Activated CD4-positive, alpha-beta T cell treated with anti-CD3 and anti-CD28 coated beads for 36 hours (primary cell): ENCODE measurements at regions of chr5 and their contacts with region 1.

Region 1: DNA sequence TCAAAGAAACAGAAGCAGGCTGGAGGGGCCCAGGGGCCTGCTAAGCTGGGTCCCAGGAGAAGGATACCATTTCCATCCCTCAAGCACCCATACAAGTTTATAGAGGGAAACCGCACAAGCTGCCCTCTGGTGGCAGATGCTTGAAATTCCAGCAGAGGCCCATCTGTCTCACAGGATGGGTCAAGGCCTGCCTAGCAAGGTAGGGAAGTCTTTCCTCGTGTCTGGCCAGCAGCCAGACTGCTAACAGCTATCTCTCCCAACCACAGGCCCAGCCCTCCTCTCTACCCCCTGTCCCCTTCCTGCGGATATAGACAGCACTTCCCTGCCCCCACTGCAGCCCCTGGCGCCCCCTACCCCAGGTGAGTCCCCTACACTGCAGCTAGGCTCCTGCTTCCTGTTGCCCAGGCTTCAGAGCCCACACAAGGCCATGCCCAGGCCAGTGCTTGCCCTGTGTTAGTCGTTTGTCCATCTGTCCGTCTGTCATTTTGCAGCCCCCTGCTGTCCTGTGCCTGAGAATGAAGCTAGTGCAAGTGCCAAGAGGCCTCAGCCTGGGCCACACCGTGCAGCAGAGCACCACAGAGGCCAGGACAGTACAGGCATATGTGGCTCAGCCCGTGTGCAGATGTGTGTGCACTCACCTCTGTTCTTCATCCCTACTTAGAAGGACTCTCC is 26.2 kb downstream of the TCF7 start:
- DNase-seq: peak; percentile 82
- ATAC-seq: peak; percentile 42
- H3K4me3 Mint-ChIP-seq: no peak overlapping the region
- H3K27ac Mint-ChIP-seq: no peak overlapping the region
- H3K4me1 Mint-ChIP-seq: peaks cover 69% of the 10 kb centered on the region
- H3K27me3 Mint-ChIP-seq: no peaks in the 10 kb centered on the region

Region 2: DNA sequence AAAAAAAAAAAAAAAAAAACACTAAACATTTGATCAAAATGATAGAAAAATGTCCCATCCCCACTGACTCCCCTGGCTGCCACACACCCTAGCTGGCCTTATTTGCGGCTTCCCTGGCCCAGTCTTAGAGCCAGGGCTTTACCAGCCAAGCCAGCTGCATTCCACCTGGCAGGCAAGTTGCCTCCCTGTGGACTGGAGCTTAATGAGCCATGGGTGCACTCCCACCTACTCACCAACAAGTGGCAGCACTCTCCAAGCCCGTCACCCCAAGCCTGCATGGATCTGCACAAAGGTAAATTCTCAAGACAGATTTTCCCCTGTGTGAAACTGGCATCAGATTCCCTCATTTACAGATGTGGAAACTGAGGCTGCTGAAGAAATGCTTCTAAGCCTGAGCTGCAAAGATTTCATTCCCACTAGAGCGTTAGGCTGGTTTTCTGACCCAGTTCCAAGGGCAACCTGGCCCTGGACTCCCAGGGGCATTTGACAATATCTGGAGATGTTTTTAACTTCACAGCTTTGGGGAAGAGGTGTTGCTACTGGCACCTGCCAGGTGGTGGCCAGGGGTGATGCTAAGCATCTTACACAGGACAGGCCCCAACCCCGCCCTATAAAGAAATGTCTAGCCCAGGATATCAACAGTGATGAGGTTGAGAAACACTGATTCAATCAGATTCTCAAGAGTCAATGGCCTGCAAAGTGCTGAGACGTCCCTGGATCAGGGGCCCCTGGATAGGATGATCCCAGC is 114.0 kb before region 1 on chr5:
- CTCF ChIA-PET with region 1: interaction called, 554 read pairs
- POLR2A ChIA-PET with region 1: no interaction called
- intact Hi-C with region 1: no loop called
- DNase-seq: peak; percentile 75
- ATAC-seq: peak; percentile 99
- H3K4me3 Mint-ChIP-seq: no peak overlapping the region
- H3K27ac Mint-ChIP-seq: no peak overlapping the region
- H3K4me1 Mint-ChIP-seq: no peaks in the 10 kb centered on the region
- H3K27me3 Mint-ChIP-seq: no peaks in the 10 kb centered on the region

Region 3: DNA sequence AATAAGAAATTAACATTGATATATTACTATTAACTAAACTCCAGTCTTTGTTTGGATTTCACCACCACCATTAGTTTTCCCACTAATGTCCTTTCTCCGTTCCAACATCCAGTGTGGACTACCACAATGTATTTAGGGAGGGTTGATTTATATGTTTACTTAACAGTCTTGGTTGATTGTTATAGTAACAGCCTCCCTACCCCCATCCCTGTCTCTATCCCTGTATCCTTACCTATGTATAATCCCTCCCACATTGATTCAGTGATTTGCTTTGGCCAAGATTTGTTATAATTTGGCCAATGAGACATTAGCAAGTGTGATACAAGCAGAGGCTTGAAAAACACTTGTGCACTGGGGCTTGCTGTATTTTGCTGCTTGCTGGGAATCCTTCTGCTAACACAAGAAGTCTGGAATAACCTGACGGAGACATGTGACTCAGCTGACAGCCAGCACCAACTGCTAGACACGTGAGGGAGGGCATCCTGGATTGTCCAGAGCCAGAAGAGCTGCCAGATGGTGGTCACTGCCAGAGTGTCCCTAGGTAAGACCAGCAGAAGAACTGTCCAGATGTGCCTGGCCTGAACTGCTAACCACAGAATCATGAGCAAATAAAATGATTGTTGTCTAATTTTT is 77.4 kb before region 1 on chr5:
- CTCF ChIA-PET with region 1: interaction called, 33 read pairs
- POLR2A ChIA-PET with region 1: no interaction called
- intact Hi-C with region 1: loop called in 1 of 2 experiments (anchors 1 kb)
- DNase-seq: no peak
- ATAC-seq: no peak
- H3K4me3 Mint-ChIP-seq: no peak overlapping the region
- H3K27ac Mint-ChIP-seq: no peak overlapping the region
- H3K4me1 Mint-ChIP-seq: peaks cover 23% of the 10 kb centered on the region
- H3K27me3 Mint-ChIP-seq: no peaks in the 10 kb centered on the region

Region 4: GRCh38 chr5:134086943-134087305 is 53.7 kb before region 1 on chr5:
- CTCF ChIA-PET with region 1: interaction called, 5 read pairs
- POLR2A ChIA-PET with region 1: no interaction called
- intact Hi-C with region 1: loop called (anchors 1 to 5 kb)
- DNase-seq: peak; percentile 90
- ATAC-seq: peak; percentile 87
- H3K4me3 Mint-ChIP-seq: peak overlapping the region; percentile 46
- H3K27ac Mint-ChIP-seq: peak overlapping the region; percentile 93
- H3K4me1 Mint-ChIP-seq: peaks cover 84% of the 10 kb centered on the region
- H3K27me3 Mint-ChIP-seq: peaks cover 1% of the 10 kb centered on the region

Region 5: GRCh38 chr5:134125039-134126015 is 15.3 kb before region 1 on chr5:
- CTCF ChIA-PET with region 1: interaction called, 73 read pairs
- POLR2A ChIA-PET with region 1: interaction called, 5 read pairs
- intact Hi-C with region 1: no loop called
- DNase-seq: peak; percentile 54
- ATAC-seq: no peak
- H3K4me3 Mint-ChIP-seq: peak overlapping the region; percentile 52
- H3K27ac Mint-ChIP-seq: peak overlapping the region; percentile 91
- H3K4me1 Mint-ChIP-seq: peaks cover 100% of the 10 kb centered on the region
- H3K27me3 Mint-ChIP-seq: no peaks in the 10 kb centered on the region